Adrenal gland (tissue), 19 donors: ENCODE measurements at regions of chr3 and their contacts with region 1.

Region 1: DNA sequence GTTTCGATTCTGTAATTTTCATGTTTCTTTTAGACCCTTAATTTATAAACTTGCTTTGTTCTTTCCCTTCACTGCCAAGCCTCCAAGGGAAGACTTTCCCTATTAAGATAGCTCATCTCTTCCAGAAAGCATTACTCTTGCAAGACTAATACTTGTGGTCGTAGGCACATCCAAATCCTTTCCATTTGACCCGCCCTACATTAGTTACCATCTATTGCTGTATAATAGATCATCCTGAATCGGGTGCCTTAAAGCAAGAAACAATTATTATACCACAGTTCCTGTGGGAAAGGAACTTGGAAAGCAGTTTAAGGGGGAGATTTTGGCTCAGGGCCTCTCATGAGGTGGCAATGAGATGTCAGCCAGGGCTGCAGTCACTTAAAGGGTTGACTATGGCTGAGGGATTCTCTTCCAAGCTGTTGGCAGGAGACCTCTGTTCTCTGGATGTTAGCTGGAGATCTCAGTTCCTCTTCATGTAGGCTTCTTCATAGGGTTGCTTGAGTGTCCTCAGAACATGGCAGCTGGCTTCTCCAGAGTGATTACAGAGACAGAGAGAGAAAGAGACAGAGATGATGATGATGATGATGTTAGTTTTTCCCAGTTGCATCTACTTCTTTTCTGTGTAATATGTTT is 570.4 kb upstream of the TGFBR2 start:
- DNase-seq: no peak
- H3K4me3 ChIP-seq: no peak overlapping the region
- H3K27ac ChIP-seq: no peak overlapping the region
- H3K4me1 ChIP-seq: no peaks in the 10 kb centered on the region
- H3K27me3 ChIP-seq: no peaks in the 10 kb centered on the region
- CTCF ChIP-seq: no peak
- POLR2A ChIP-seq: no peak

Region 2: DNA sequence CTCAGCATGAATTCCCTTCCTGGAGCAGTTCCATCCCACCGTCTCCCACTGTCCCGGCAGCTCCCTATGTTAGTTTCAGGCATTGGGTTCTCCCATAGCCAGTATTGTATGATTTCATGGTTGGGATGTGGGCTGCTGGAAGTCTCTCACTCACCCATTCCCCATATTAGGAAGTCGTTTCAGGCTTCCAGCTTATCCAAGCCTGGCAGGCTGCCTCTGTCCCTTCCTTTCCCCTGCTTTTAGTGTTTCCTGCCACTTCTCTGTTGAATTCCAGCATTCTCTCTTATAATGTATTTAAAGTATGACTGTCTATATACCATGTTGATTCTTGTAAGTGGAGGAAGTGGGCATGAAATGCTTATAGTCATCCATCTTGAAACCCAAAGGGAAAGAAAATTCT is 1064.9 kb before region 1 on chr3:
- intact Hi-C with region 1: no loop called
- DNase-seq: no peak
- H3K4me3 ChIP-seq: no peak overlapping the region
- H3K27ac ChIP-seq: no peak overlapping the region
- H3K4me1 ChIP-seq: no peaks in the 10 kb centered on the region
- H3K27me3 ChIP-seq: no peaks in the 10 kb centered on the region
- CTCF ChIP-seq: no peak
- POLR2A ChIP-seq: no peak

Region 3: DNA sequence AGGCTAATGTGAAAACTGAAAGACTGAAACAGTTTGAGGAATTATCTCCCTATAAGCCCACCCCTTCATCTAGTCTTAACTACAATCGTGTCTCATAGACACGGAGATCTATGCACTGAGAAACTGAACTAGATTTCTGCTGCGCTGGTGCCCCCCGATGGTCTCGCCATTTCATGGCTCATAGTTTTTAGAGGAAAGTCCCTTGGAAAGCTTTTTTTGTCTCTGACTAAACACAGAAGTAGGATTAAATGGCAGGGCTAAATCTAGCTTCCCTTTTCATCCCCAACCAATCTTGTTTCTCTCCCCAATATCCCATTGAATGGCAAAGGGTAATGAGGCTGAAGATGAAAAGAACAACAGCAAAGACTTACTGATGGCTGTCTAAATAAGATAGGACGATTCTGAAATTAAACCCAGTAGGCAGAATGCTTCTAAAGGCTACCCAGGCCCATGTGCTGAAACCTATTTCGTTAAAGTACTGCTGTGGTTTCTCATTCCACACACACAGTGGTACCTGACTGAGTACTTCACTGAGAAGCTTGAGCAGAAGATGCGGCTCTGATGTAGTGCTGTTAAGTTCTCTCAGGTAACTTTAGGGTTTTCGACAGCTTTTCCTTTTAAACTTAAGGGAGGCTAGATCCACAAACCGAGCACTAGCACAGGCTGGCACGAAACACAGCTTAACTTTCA is 715.7 kb after region 1 on chr3:
- intact Hi-C with region 1: loop called in 1 of 2 experiments (anchors 5 kb)
- DNase-seq: peak in 6 of 7 donors; percentile 30 to 64 (median 36)
- H3K4me3 ChIP-seq: no peak overlapping the region
- H3K27ac ChIP-seq: no peak overlapping the region
- H3K4me1 ChIP-seq: no peaks in the 10 kb centered on the region
- H3K27me3 ChIP-seq: no peaks in the 10 kb centered on the region
- CTCF ChIP-seq: peak; percentile 12 to 41 (median 27)
- POLR2A ChIP-seq: no peak